Calu3 (cell line): ENCODE measurements at regions of chr5 and their contacts with region 1.

Region 1: DNA sequence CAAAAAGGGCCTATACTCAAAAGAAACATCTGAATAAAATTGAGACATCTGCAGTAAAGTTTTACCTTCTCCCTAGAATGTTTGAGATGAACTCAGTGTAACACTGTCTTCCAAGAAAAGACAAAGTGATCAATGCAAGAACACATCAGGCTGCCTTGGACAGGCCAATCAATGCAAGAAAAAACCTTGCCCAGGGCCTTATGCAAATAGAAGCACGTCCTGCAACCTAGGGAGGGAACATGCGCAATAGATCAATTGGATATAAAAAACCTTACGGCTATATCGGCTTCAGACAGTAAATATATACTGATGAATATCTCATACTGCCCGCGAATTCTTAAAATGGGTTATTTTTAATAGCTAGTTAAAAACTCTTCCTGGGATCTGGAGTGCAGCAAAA is 66.4 kb upstream of the POU5F2 start:
- DNase-seq: no peak
- H3K4me3 Mint-ChIP-seq: no peak overlapping the region
- H3K27ac Mint-ChIP-seq: no peak overlapping the region
- H3K4me1 Mint-ChIP-seq: no peaks in the 10 kb centered on the region
- H3K27me3 Mint-ChIP-seq: no peaks in the 10 kb centered on the region
- CTCF ChIP-seq: no peak

Region 2: GRCh38 chr5:94181895-94182294 is 374.0 kb after region 1 on chr5:
- CTCF ChIA-PET with region 1: interaction called, 16 read pairs
- intact Hi-C with region 1: no loop called
- DNase-seq: peak; percentile 29
- H3K4me3 Mint-ChIP-seq: no peak overlapping the region
- H3K27ac Mint-ChIP-seq: no peak overlapping the region
- H3K4me1 Mint-ChIP-seq: no peaks in the 10 kb centered on the region
- H3K27me3 Mint-ChIP-seq: no peaks in the 10 kb centered on the region
- CTCF ChIP-seq: no peak